ENCODE measurements at regions of chr4 and their contacts with region 1.

Region 1: DNA sequence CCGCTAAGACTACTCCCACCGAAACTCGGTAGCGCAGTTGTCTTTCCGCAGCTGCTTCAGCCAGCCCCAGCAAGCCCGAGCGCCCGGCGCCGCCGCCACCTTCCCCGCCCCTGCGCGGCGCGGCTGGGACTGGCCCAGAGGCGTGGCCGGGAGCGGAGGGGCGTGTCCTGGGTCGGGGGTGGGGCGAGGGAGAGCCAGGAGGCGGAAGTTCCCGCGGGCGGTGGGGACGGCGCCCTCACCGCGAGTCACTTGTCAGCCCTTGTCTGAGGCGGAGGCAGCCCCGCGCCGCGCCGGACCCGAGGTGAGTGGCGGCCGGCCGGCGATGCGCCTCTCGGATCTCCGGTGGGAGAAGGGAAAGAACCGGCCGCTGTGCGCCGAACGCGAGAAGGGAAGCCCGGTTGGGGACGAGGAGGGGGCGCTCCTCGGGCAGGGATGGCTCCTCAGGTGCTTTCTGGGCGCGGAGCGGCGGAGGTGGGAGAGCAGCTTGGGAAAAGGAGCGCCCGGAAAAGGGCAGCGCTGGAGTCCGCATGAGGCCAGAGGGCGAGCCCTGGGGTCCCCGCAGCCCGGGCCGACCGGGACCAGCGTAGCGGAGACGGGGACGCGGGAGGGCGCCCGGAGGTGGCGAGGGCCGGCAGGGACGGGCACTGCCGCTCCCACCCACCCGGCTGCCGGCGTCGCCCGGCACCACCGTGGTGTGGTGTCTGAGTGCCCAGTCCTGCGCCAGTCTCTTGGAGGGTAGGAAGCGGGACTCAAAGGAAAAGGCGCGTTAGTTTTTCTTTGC is at the start of gene PDLIM5:
- DNase-seq: peak; percentile 85 to 91 (median 88)
- H3K4me3 ChIP-seq: peak within 1 kb of the TSS; percentile 66 to 86
- H3K4me3 Mint-ChIP-seq: peak within 1 kb of the TSS; percentile 85 to 93 (median 90)
- H3K27ac ChIP-seq: peak within 1 kb of the TSS; percentile 66
- H3K27ac Mint-ChIP-seq: peak within 1 kb of the TSS; percentile 70 to 92 (median 84)
- H3K4me1 ChIP-seq: peaks cover 17% of the 10 kb centered on the region
- H3K4me1 Mint-ChIP-seq: peaks cover 18 to 34% (median 21%) of the 10 kb centered on the region in 4 donors
- H3K27me3 ChIP-seq: peaks cover 4% of the 10 kb centered on the region
- H3K27me3 Mint-ChIP-seq: peaks cover 7 to 10% of the 10 kb centered on the region in 2 donors
- total RNA-seq, gene PDLIM5: 37.4 to 38.9 TPM

Region 2: DNA sequence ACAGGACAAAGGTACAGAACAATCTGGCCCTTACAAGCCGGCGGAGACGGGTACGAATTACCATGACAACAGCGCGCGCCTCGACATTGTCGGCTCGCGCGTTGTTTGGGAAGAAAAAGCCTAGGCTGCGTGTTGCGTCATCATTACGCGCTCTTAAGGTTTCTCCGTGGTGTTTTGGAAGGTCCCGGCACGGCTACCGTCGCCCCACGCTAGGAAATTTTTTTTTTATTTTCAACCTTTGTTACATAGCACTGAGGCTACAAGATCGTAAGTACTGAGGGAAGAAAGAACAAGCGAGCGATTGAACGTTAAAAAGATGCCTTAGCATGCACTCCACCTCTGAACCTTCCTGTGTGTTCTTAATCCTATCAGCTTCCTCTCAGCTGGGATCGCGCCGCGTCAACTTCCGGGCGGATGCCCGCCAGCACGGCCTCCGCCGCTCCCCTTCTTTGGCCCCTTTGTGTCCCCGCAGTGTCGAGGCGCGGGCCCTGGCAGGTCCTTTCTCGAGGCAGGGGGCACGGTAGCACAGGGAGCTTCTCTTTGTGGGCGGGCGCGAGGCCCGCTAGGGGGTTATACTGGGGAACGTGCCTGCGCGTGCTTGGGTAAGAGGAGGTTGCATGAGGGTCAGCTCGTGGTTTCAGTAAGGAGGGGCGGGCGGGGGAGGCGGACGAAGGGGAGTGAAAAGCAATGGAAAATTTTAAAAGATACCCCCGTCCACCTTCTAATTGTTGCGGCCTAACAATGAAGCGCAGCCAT is 244.2 kb before region 1 on chr4 and contains the start of gene SMARCAD1:
- CTCF ChIA-PET with region 1: no interaction called
- POLR2A ChIA-PET with region 1: interaction called, 7 read pairs
- intact Hi-C with region 1: loop called (anchors 2 kb)
- DNase-seq: peak; percentile 89 to 92 (median 90)
- H3K4me3 ChIP-seq: peak within 1 kb of the TSS; percentile 52 to 91
- H3K4me3 Mint-ChIP-seq: peak within 1 kb of the TSS; percentile 96 to 100 (median 97)
- H3K27ac ChIP-seq: peak within 1 kb of the TSS; percentile 84
- H3K27ac Mint-ChIP-seq: peak within 1 kb of the TSS; percentile 96 to 100 (median 99)
- H3K4me1 ChIP-seq: peaks cover 25% of the 10 kb centered on the region
- H3K4me1 Mint-ChIP-seq: peaks cover 21 to 52% (median 39%) of the 10 kb centered on the region in 4 donors
- H3K27me3 ChIP-seq: peaks cover 6% of the 10 kb centered on the region
- H3K27me3 Mint-ChIP-seq: peaks cover 0 to 3% of the 10 kb centered on the region in 2 donors
- total RNA-seq, gene SMARCAD1: 28.7 to 30.7 TPM

Measured in CD4-positive, alpha-beta memory T cell (primary cell).